ENCODE measurements at regions of chr2 and their contacts with region 1.

Region 1: DNA sequence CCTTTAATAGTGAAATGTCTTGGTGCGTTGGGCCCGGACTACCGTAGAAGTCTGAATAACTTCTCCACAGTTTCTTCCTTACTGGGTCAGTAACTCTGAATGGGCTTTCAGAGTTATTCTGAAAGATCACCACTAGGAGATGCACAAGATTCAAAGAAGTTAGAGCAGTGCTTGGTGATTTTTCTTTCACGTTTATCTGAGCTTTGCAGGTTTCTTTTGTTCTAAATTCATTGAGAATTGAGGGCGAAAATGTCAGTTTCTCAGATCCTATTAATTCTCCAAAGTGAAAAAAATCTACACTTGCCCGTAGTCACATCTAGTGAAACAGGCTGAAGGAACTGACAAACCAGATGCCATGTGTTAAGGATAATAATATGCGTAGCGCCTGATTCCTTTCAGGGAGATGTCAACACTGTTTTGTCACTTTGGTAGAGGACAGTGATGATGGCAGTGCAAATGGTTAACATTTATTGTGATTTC is 70.1 kb downstream of the QPCT start:
- DNase-seq: peak; percentile 65
- H3K4me3 Mint-ChIP-seq: no peak overlapping the region
- H3K27ac Mint-ChIP-seq: no peak overlapping the region
- H3K4me1 Mint-ChIP-seq: peaks cover 12% of the 10 kb centered on the region
- H3K27me3 Mint-ChIP-seq: no peaks in the 10 kb centered on the region
- CTCF ChIP-seq: peak; percentile 81

Region 2: GRCh38 chr2:37436323-37436722 is 21.8 kb after region 1 on chr2:
- CTCF ChIA-PET with region 1: interaction called, 12 read pairs
- POLR2A ChIA-PET with region 1: no interaction called
- intact Hi-C with region 1: no loop called
- DNase-seq: no peak
- H3K4me3 Mint-ChIP-seq: no peak overlapping the region
- H3K27ac Mint-ChIP-seq: no peak overlapping the region
- H3K4me1 Mint-ChIP-seq: no peaks in the 10 kb centered on the region
- H3K27me3 Mint-ChIP-seq: no peaks in the 10 kb centered on the region
- CTCF ChIP-seq: no peak

Region 3: GRCh38 chr2:37653805-37654378 is 239.4 kb after region 1 on chr2:
- CTCF ChIA-PET with region 1: interaction called, 12 read pairs
- POLR2A ChIA-PET with region 1: interaction called, 3 read pairs
- intact Hi-C with region 1: loop called (anchors 5 kb)
- DNase-seq: peak; percentile 89
- H3K4me3 Mint-ChIP-seq: peak overlapping the region; percentile 33
- H3K27ac Mint-ChIP-seq: peak overlapping the region; percentile 97
- H3K4me1 Mint-ChIP-seq: peaks cover 75% of the 10 kb centered on the region
- H3K27me3 Mint-ChIP-seq: no peaks in the 10 kb centered on the region
- CTCF ChIP-seq: no peak

Region 4: GRCh38 chr2:37809525-37809924 is 395.0 kb after region 1 on chr2:
- CTCF ChIA-PET with region 1: interaction called, 8 read pairs
- POLR2A ChIA-PET with region 1: no interaction called
- intact Hi-C with region 1: loop called (anchors 1 kb)
- DNase-seq: peak; percentile 65
- H3K4me3 Mint-ChIP-seq: no peak overlapping the region
- H3K27ac Mint-ChIP-seq: no peak overlapping the region
- H3K4me1 Mint-ChIP-seq: no peaks in the 10 kb centered on the region
- H3K27me3 Mint-ChIP-seq: no peaks in the 10 kb centered on the region
- CTCF ChIP-seq: peak; percentile 49

Region 5: GRCh38 chr2:37877457-37878315 is 463.2 kb after region 1 on chr2:
- CTCF ChIA-PET with region 1: interaction called, 172 read pairs
- POLR2A ChIA-PET with region 1: no interaction called
- intact Hi-C with region 1: loop called (anchors 1 kb)
- DNase-seq: peak; percentile 78
- H3K4me3 Mint-ChIP-seq: no peak overlapping the region
- H3K27ac Mint-ChIP-seq: no peak overlapping the region
- H3K4me1 Mint-ChIP-seq: peaks cover 4% of the 10 kb centered on the region
- H3K27me3 Mint-ChIP-seq: peaks cover 12% of the 10 kb centered on the region
- CTCF ChIP-seq: peak; percentile 79

Measured in MCF 10A (cell line).